ENCODE measurements at regions of chr2 and their contacts with region 1.

Region 1: GRCh38 chr2:96703021-96703770 is 36.7 kb downstream of the LMAN2L start:
- DNase-seq: no peak
- H3K4me3 ChIP-seq: no peak overlapping the region
- H3K27ac ChIP-seq: no peak overlapping the region
- H3K4me1 ChIP-seq: no peaks in the 10 kb centered on the region
- H3K27me3 ChIP-seq: no peaks in the 10 kb centered on the region
- CTCF ChIP-seq: no peak

Region 2: DNA sequence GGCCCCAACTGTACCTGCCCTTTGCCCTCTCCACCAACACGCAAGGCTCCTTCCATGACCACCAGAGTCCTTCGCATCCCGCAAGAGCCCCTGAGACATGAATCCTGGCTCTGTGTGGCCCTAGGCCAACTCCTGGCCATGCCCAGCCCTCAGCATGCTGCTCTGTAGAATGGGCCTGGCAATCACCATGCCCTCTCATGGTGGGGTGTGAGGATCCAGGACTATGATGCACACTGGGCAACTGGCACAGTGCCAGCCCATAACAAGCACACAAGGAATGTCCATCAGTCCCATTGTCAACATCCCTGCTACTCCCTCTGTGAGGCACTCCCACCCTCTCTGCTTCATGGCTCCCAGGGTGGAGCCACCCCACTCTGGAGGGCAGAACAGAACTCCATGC is 15.9 kb before region 1 on chr2:
- CTCF ChIA-PET with region 1: interaction called, 11 read pairs
- POLR2A ChIA-PET with region 1: no interaction called
- intact Hi-C with region 1: no loop called
- DNase-seq: no peak
- H3K4me3 ChIP-seq: no peak overlapping the region
- H3K27ac ChIP-seq: no peak overlapping the region
- H3K4me1 ChIP-seq: no peaks in the 10 kb centered on the region
- H3K27me3 ChIP-seq: no peaks in the 10 kb centered on the region
- CTCF ChIP-seq: no peak

Region 3: GRCh38 chr2:97095661-97096060 is 392.5 kb after region 1 on chr2:
- CTCF ChIA-PET with region 1: no interaction called
- POLR2A ChIA-PET with region 1: no interaction called
- intact Hi-C with region 1: no loop called
- DNase-seq: no peak
- H3K4me3 ChIP-seq: peak overlapping the region; percentile 60
- H3K27ac ChIP-seq: no peak overlapping the region
- H3K4me1 ChIP-seq: peaks cover 13% of the 10 kb centered on the region
- H3K27me3 ChIP-seq: peaks cover 5% of the 10 kb centered on the region; the same call in 1 of the 2 replicates
- CTCF ChIP-seq: no peak

Measured in PC-9 (cell line).